ENCODE measurements at regions of chr17 and their contacts with region 1.

Region 1: GRCh38 chr17:4986951-4987766 is at the start of gene CAMTA2:
- DNase-seq: peak in 1 of 2 experiments; percentile 93
- H3K4me3 ChIP-seq: peak within 1 kb of the TSS; percentile 59 to 85 (median 66)
- H3K27ac ChIP-seq: no peak within 1 kb of the TSS
- H3K4me1 ChIP-seq: peaks cover 0 to 7% (median 4%) of the 10 kb centered on the region in 4 experiments; a peak in 5 of 7 replicates
- H3K27me3 ChIP-seq: peaks cover 0 to 11% (median 9%) of the 10 kb centered on the region in 4 experiments; a peak in 6 of 7 replicates
- CTCF ChIP-seq: peak; percentile 40 to 52 (median 47)
- EP300 ChIP-seq: peak in 1 of 2 experiments; percentile 29; a peak in 1 of 3 replicates
- POLR2A ChIP-seq: no peak
- RAD21 ChIP-seq: peak in 1 of 2 experiments; percentile 27; a peak in 1 of 4 replicates
- total RNA-seq, gene CAMTA2: 11.4 and 12.0 TPM in 2 replicates

Region 2: DNA sequence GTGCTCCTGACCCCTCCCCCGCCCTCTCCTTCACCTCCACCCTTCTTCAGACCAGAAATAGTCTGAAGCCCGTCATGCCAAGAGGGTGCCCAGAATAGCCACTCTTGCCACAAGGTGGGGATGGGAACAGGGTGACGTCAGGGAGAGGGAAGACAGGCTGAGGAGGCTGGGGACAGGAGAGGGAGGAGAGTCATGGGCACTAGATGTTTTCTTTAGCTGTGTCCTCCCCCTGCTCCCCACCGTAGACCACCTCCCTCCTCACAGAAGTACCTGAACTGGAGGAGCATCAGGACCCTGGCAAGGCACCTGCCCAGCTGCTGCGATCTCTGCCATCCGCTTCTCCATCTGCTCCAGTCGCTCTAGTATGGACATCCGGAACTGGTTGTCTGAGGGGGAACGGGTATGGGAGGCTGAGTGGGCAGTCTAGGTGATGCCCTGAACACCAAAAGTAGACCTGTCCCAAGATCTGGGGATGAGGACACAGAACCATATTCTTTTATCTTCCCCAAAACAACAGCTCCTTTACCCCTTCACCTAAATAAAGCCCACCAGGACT is 13.0 kb before region 1 on chr17:
- CTCF ChIA-PET with region 1: interaction called, 43 read pairs
- POLR2A ChIA-PET with region 1: interaction called, 128 read pairs
- DNase-seq: no peak
- H3K4me3 ChIP-seq: no peak overlapping the region
- H3K27ac ChIP-seq: no peak overlapping the region
- H3K4me1 ChIP-seq: peaks cover 0 to 7% (median 3%) of the 10 kb centered on the region in 4 experiments; a peak in 4 of 7 replicates
- H3K27me3 ChIP-seq: peaks cover 0 to 51% (median 37%) of the 10 kb centered on the region in 4 experiments; a peak in 6 of 7 replicates
- CTCF ChIP-seq: no peak
- EP300 ChIP-seq: no peak
- POLR2A ChIP-seq: no peak; a peak in 1 of 3 replicates
- RAD21 ChIP-seq: no peak

Region 3: GRCh38 chr17:4997302-4998026 is 10.3 kb after region 1 on chr17 and contains the starts of genes INCA1 and KIF1C:
- CTCF ChIA-PET with region 1: interaction called, 13 read pairs
- POLR2A ChIA-PET with region 1: interaction called, 36 read pairs
- DNase-seq: peak; percentile 64 to 95
- H3K4me3 ChIP-seq: peak within 1 kb of the TSS; percentile 75 to 80 (median 78)
- H3K27ac ChIP-seq: peak within 1 kb of the TSS; percentile 88; the same call in 1 of the 2 replicates
- H3K4me1 ChIP-seq: peaks cover 4 to 17% (median 8%) of the 10 kb centered on the region in 4 experiments
- H3K27me3 ChIP-seq: peaks cover 0 to 13% (median 1%) of the 10 kb centered on the region in 4 experiments; a peak in 4 of 7 replicates
- CTCF ChIP-seq: no peak
- EP300 ChIP-seq: no peak; a peak in 1 of 3 replicates
- POLR2A ChIP-seq: no peak; a peak in 1 of 3 replicates
- RAD21 ChIP-seq: no peak
- total RNA-seq, gene INCA1: 1.1 and 1.4 TPM in 2 replicates
- total RNA-seq, gene KIF1C: 114 and 118 TPM in 2 replicates